Mammary epithelial cell (primary cell): ENCODE measurements at regions of chr1 and their contacts with region 1.

Region 1: DNA sequence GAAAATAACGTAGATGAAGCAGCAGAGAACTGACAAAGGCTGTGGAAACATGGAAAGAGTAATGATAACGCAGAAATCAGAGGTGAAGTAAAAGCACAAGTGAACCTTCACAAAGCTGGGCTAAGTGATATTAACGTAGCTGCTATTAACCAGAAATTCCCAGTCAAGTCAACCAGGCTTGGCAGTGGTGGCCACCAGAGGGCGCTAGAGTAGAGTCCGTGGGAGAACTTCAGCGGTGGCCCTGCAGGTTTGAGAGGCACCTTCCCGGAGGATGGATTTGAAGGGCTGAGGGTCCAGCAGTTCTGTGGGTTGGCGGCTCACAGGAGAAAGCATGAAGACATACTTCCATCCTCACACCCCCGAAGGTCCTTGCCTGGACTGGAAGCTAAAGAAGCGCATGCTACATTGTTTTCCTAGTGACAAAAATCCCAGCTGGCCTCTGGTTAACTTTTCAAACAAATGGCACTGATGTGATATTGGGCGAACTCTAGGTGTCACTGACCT is 81.7 kb upstream of the ZNF648 start:
- DNase-seq: peak; percentile 73
- H3K4me3 ChIP-seq: no peak overlapping the region
- H3K27ac ChIP-seq: no peak overlapping the region
- H3K4me1 ChIP-seq: peaks cover 38% of the 10 kb centered on the region
- H3K27me3 ChIP-seq: no peaks in the 10 kb centered on the region
- CTCF ChIP-seq: peak; percentile 93 to 95

Region 2: DNA sequence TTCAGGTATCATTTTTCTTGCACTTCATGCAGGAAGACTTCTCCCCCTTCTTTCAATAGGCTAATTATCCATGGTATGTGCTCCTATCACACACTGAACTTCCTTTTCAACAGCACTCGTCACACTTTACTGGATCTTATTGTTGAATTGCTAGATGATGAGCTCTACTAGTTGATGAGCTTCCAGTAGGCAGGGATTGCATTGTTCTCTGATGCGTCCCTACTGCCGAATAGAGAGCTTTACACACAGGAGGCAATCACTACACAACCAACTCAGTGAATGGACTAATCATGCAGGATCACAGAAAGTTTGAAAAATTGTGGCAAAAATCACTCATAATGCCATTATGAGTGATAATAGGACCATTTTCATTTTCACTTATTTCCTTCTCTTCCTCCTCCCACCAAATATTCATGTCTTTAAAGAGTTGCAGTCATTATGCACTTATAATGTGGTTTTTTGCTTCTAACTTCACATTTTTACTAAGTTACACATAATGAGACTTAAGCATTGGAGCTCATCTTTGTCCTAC is 46.4 kb after region 1 on chr1:
- CTCF ChIA-PET with region 1: interaction called, 10 read pairs
- dilution Hi-C with region 1: loop called (anchors 5 kb)
- in situ Hi-C with region 1: no loop called
- intact Hi-C with region 1: no loop called
- DNase-seq: no peak
- H3K4me3 ChIP-seq: no peak overlapping the region
- H3K27ac ChIP-seq: no peak overlapping the region
- H3K4me1 ChIP-seq: peaks cover 23% of the 10 kb centered on the region
- H3K27me3 ChIP-seq: no peaks in the 10 kb centered on the region
- CTCF ChIP-seq: no peak

Region 3: DNA sequence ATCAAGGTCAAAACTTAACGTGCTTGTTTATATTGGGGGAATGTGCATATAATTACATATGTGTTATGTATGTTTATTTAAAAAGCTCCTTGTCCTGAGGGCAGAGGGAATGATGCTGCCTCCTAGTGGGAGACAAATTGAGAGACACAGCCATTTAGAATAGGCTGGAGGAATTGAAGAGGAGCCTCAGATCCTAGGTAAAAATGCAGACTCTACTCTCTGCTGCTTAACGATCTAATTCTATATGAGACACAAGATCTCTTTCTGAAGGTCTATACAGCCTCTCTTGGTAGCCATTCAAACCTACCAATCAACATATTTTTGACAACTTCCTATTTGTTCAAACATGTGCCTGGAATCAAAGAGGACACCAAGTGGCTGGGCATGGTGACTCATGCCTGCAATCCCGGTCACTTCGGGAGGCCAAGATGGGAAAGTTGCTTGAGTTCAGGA is 54.9 kb after region 1 on chr1:
- CTCF ChIA-PET with region 1: interaction called, 9 read pairs
- dilution Hi-C with region 1: no loop called
- in situ Hi-C with region 1: no loop called
- intact Hi-C with region 1: loop called (anchors 1 kb)
- DNase-seq: no peak
- H3K4me3 ChIP-seq: no peak overlapping the region
- H3K27ac ChIP-seq: no peak overlapping the region
- H3K4me1 ChIP-seq: peaks cover 5% of the 10 kb centered on the region
- H3K27me3 ChIP-seq: no peaks in the 10 kb centered on the region
- CTCF ChIP-seq: peak; percentile 22 to 50

Region 4: GRCh38 chr1:182215764-182216163 is 72.6 kb after region 1 on chr1:
- CTCF ChIA-PET with region 1: no interaction called
- dilution Hi-C with region 1: no loop called
- in situ Hi-C with region 1: no loop called
- intact Hi-C with region 1: loop called (anchors 1 kb)
- DNase-seq: no peak
- H3K4me3 ChIP-seq: no peak overlapping the region
- H3K27ac ChIP-seq: no peak overlapping the region
- H3K4me1 ChIP-seq: peaks cover 28% of the 10 kb centered on the region
- H3K27me3 ChIP-seq: no peaks in the 10 kb centered on the region
- CTCF ChIP-seq: no peak

Region 5: DNA sequence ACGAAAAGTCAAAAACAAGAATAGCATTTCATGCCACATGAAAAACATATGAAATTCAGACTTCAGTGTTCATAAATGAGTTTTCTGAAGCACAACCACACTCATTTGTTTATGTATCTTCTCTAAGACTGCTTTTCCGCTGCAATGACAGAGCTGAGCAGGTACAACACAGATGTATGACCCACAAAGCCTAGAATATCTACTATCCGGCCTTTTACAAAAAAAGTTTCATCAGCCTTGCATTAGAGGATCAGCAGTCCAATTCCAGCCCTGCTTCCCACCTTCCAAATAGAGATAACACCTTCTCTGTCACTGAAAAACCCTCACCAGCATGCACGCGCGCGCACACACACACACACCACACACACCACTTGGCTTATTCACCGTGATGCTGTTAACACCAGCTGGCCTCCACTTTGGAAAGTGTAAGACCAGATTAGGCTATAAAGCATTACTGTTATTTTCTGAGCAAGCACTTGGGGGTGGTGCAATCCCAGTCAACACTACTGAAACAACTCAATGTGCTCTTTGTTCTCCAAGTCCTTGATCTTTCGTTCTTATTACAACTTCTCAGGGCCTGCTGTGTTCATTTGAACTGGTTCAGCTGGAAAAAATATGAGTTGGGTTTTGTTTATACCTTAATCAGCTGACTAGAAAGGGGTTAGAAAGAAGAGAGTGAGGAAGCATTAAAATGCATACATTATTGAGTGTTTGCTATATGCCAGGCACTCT is 158.4 kb after region 1 on chr1:
- CTCF ChIA-PET with region 1: no interaction called
- dilution Hi-C with region 1: no loop called
- in situ Hi-C with region 1: no loop called
- intact Hi-C with region 1: loop called (anchors 1 kb)
- DNase-seq: peak; percentile 80
- H3K4me3 ChIP-seq: no peak overlapping the region
- H3K27ac ChIP-seq: no peak overlapping the region
- H3K4me1 ChIP-seq: peaks cover 3% of the 10 kb centered on the region
- H3K27me3 ChIP-seq: no peaks in the 10 kb centered on the region
- CTCF ChIP-seq: peak in 1 of 2 donors; percentile 45

Region 6: GRCh38 chr1:182391362-182392044 is 248.3 kb after region 1 on chr1 and contains the start of gene GLUL:
- CTCF ChIA-PET with region 1: interaction called, 38 read pairs
- dilution Hi-C with region 1: no loop called
- in situ Hi-C with region 1: loop called (anchors 5 kb)
- intact Hi-C with region 1: loop called (anchors 1 kb)
- DNase-seq: peak; percentile 88
- H3K4me3 ChIP-seq: peak within 1 kb of the TSS; percentile 75 to 95 (median 82)
- H3K27ac ChIP-seq: peak within 1 kb of the TSS; percentile 51
- H3K4me1 ChIP-seq: peaks cover 9% of the 10 kb centered on the region
- H3K27me3 ChIP-seq: no peaks in the 10 kb centered on the region
- CTCF ChIP-seq: peak in 1 of 2 donors; percentile 17
- total RNA-seq, gene GLUL: 400 to 471 TPM

Region 7: DNA sequence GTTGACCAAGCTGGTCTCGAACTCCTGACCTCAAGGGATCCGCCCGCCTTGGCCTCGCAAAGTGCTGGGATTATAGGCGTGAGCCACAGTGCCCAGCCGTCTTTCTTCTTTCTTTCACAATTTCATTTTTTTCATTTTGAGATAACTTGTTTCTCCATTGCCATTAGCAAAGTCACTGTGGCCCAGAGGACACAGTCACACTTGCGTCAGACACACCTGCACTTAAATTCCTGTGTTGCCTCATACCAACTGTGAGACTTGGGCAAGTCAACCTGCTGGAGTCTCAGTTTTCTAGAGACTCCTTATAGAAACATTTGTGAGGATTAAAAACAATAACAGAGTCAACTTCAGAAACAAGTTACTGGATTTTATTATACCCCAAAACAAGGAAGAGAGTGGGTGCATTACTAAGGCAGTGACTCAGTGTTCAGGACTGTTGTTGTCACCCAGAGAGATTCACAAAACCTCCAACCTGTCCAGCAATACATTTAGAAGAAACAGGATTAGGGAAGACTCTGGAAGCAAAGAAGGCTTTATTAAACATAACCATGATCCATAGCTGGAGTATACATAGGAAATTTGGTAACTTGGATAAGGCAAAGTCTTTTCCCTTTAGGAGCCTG is 254.7 kb after region 1 on chr1:
- CTCF ChIA-PET with region 1: interaction called, 38 read pairs
- dilution Hi-C with region 1: no loop called
- in situ Hi-C with region 1: loop called (anchors 5 kb)
- intact Hi-C with region 1: loop called (anchors 1 kb)
- DNase-seq: peak; percentile 75
- H3K4me3 ChIP-seq: no peak overlapping the region
- H3K27ac ChIP-seq: no peak overlapping the region
- H3K4me1 ChIP-seq: peaks cover 18% of the 10 kb centered on the region
- H3K27me3 ChIP-seq: no peaks in the 10 kb centered on the region
- CTCF ChIP-seq: no peak

Region 8: GRCh38 chr1:182806015-182806678 is 662.9 kb after region 1 on chr1:
- CTCF ChIA-PET with region 1: no interaction called
- dilution Hi-C with region 1: no loop called
- in situ Hi-C with region 1: no loop called
- intact Hi-C with region 1: no loop called
- DNase-seq: no peak
- H3K4me3 ChIP-seq: no peak overlapping the region
- H3K27ac ChIP-seq: no peak overlapping the region
- H3K4me1 ChIP-seq: peaks cover 14% of the 10 kb centered on the region
- H3K27me3 ChIP-seq: no peaks in the 10 kb centered on the region
- CTCF ChIP-seq: peak in 1 of 2 donors; percentile 16